Caco-2 (cell line): ENCODE measurements at regions of chr3 and their contacts with region 1.

Region 1: DNA sequence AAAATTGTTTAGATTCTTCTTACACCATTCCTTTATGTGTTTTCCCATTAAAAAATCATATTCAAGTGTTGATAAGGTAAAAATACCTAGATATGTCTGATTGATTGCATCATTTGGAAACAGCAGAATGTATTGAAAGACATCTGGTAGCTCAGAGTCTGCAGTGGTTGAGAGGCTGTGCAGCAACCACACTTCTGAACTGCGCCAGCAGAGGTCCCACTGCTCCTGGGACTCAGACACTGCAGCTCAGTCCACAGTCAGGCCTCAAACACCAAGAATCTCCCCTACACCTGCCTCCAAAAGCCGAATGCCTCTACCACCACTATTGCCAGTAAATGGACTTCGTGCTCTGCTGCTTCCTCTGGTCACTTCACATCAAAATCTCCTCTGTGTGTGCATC is 176.9 kb upstream of the LMCD1 start:
- DNase-seq: peak; percentile 46
- H3K4me3 ChIP-seq: no peak overlapping the region
- H3K4me3 Mint-ChIP-seq: no peak overlapping the region
- H3K27ac Mint-ChIP-seq: no peak overlapping the region
- H3K4me1 ChIP-seq: no peaks in the 10 kb centered on the region
- H3K4me1 Mint-ChIP-seq: no peaks in the 10 kb centered on the region
- H3K27me3 ChIP-seq: no peaks in the 10 kb centered on the region; the same call in 1 of the 2 replicates
- H3K27me3 Mint-ChIP-seq: peaks cover 6% of the 10 kb centered on the region
- CTCF ChIP-seq: peak; percentile 31 to 45

Region 2: DNA sequence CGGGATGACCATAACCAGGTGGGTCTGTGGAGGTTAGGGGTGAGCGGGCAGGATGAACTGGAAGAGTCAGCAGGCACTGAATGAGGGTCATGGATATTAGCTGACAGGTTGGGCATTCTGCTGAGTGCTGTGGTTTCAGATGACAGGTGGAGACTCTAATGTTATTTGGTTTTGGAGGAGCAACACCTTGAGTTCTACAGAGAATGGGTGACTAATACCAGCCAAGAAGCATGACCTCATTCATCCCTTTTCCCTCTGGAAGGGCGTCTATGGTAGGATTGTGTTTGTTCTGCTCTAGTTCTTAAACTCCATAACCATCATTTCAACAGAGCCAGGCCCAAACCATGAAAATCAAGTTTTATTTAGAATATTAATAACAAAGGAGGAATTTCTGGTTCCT is 373.9 kb before region 1 on chr3:
- CTCF ChIA-PET with region 1: no interaction called
- POLR2A ChIA-PET with region 1: no interaction called
- intact Hi-C with region 1: no loop called
- DNase-seq: no peak
- H3K4me3 ChIP-seq: no peak overlapping the region
- H3K4me3 Mint-ChIP-seq: no peak overlapping the region
- H3K27ac Mint-ChIP-seq: no peak overlapping the region
- H3K4me1 ChIP-seq: no peaks in the 10 kb centered on the region
- H3K4me1 Mint-ChIP-seq: no peaks in the 10 kb centered on the region
- H3K27me3 ChIP-seq: no peaks in the 10 kb centered on the region
- H3K27me3 Mint-ChIP-seq: peaks cover 4% of the 10 kb centered on the region
- CTCF ChIP-seq: no peak

Region 3: GRCh38 chr3:8405144-8405543 is 80.4 kb after region 1 on chr3:
- CTCF ChIA-PET with region 1: no interaction called
- POLR2A ChIA-PET with region 1: no interaction called
- intact Hi-C with region 1: no loop called
- DNase-seq: no peak
- H3K4me3 ChIP-seq: no peak overlapping the region
- H3K4me3 Mint-ChIP-seq: no peak overlapping the region
- H3K27ac Mint-ChIP-seq: no peak overlapping the region
- H3K4me1 ChIP-seq: no peaks in the 10 kb centered on the region
- H3K4me1 Mint-ChIP-seq: no peaks in the 10 kb centered on the region
- H3K27me3 ChIP-seq: no peaks in the 10 kb centered on the region
- H3K27me3 Mint-ChIP-seq: peaks cover 13% of the 10 kb centered on the region
- CTCF ChIP-seq: no peak

Region 4: DNA sequence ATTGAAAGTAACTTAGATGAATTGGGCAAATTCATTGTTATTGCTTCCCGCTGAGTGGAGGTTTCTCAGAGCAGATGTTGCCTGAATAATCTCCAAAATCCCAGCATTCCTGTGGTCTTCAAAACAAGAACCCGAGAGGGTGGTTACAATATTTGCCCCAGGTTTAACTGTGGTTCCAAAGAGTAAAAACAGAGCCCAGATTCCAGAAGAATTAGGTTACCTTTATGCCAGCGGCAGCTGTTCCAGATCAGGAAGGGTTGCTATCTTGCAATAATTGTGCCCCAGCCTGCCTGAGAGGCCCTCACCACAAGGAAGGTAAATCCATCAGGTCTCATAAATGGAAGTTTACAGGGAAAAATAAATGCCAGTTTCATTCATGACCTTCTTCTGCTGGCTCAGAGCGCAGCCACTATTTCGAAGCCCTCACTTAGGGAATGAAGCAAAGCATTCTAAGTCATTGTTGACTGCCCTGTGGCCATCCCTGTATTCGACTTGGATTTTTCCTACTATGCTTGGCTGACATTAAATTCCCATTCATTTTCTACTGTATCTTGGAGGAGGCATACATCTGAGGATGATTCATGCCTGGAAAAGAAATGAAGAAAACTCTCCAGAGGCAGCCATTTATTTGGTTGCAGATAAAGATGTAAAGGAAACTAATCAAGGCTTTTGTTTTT is 265.3 kb after region 1 on chr3:
- CTCF ChIA-PET with region 1: no interaction called
- POLR2A ChIA-PET with region 1: no interaction called
- intact Hi-C with region 1: no loop called
- DNase-seq: no peak
- H3K4me3 ChIP-seq: no peak overlapping the region
- H3K4me3 Mint-ChIP-seq: no peak overlapping the region
- H3K27ac Mint-ChIP-seq: no peak overlapping the region
- H3K4me1 ChIP-seq: no peaks in the 10 kb centered on the region
- H3K4me1 Mint-ChIP-seq: no peaks in the 10 kb centered on the region
- H3K27me3 ChIP-seq: no peaks in the 10 kb centered on the region
- H3K27me3 Mint-ChIP-seq: no peaks in the 10 kb centered on the region
- CTCF ChIP-seq: no peak

Region 5: GRCh38 chr3:8607234-8608040 is 282.7 kb after region 1 on chr3:
- CTCF ChIA-PET with region 1: interaction called, 5 read pairs
- POLR2A ChIA-PET with region 1: no interaction called
- intact Hi-C with region 1: loop called (anchors 1 kb)
- DNase-seq: peak; percentile 69 to 73
- H3K4me3 ChIP-seq: no peak overlapping the region
- H3K4me3 Mint-ChIP-seq: no peak overlapping the region
- H3K27ac Mint-ChIP-seq: no peak overlapping the region
- H3K4me1 ChIP-seq: peaks cover 12% of the 10 kb centered on the region; the same call in 1 of the 2 replicates
- H3K4me1 Mint-ChIP-seq: no peaks in the 10 kb centered on the region
- H3K27me3 ChIP-seq: no peaks in the 10 kb centered on the region
- H3K27me3 Mint-ChIP-seq: no peaks in the 10 kb centered on the region
- CTCF ChIP-seq: peak; percentile 52 to 69

Region 6: DNA sequence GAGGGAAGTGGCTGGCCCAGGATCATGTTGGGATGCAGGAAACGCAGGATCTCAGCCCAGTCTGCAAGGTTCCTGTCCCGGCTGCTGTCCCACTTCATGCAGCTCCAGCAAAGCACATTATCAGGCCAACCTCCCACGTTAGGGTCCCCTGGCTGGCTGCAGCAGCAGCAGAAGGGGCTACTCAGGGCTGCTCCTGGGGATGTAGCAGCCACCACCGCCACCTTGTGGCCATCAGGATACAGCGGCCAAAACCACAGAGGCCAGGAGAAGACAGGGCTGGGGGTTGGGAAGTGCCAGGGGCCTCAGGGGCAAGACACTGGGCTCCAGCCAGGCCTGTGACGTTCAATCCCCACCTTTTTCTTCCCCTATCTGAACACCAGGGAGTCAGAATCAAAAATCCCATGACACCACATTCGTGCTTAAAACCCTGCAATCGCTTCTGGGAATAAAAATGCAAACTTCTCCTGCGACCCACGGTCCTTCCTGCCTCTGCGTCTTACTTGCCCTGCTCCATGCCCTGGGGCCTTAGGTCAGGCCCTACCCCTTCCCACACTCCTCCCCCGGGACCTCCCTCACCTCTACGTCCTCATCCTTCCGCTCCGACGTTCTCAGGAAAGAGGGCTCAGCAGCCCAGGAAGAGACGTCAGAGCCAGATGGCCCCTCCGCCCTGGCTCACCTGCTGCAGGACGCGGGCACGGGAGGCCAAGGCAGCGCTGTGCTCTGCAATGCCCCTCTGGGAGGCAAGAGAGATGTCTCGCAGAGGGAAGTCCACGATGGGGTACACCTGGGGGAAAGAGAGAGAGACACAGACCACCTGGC is 298.3 kb after region 1 on chr3:
- CTCF ChIA-PET with region 1: no interaction called
- POLR2A ChIA-PET with region 1: no interaction called
- intact Hi-C with region 1: loop called (anchors 1 kb)
- DNase-seq: peak; percentile 70 to 78
- H3K4me3 ChIP-seq: no peak overlapping the region
- H3K4me3 Mint-ChIP-seq: no peak overlapping the region
- H3K27ac Mint-ChIP-seq: peak overlapping the region; percentile 55
- H3K4me1 ChIP-seq: peaks cover 7% of the 10 kb centered on the region; the same call in 1 of the 2 replicates
- H3K4me1 Mint-ChIP-seq: peaks cover 7% of the 10 kb centered on the region
- H3K27me3 ChIP-seq: no peaks in the 10 kb centered on the region
- H3K27me3 Mint-ChIP-seq: no peaks in the 10 kb centered on the region
- CTCF ChIP-seq: peak; percentile 88